ENCODE measurements at regions of chr9 and their contacts with region 1.

Region 1: DNA sequence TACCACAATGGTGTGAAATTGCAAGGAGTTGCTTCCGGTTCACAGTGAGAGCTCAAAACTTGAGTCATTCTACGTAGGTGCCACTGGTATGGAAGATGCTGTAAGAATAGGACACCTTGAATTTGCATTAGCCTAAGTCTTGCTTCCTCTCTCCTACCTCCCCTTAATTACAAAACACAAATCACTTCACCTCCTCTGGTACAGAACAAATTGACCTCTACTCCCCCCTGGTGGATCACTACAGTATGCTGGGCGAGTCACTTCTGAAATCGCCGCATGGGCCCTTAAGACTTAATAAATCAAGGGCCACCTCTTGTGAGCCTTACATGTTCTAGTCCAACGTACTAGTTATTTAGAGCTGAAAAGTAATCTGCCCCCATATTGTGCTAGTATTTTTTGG is 145.3 kb upstream of the SMARCA2 start:
- DNase-seq: peak in 1 of 2 experiments; percentile 53
- H3K4me3 ChIP-seq: no peak overlapping the region
- H3K4me3 Mint-ChIP-seq: no peak overlapping the region
- H3K27ac Mint-ChIP-seq: no peak overlapping the region
- H3K4me1 ChIP-seq: no peaks in the 10 kb centered on the region
- H3K4me1 Mint-ChIP-seq: no peaks in the 10 kb centered on the region
- H3K27me3 ChIP-seq: no peaks in the 10 kb centered on the region
- H3K27me3 Mint-ChIP-seq: peaks cover 5% of the 10 kb centered on the region
- CTCF ChIP-seq: peak; percentile 15 to 57

Region 2: GRCh38 chr9:1726993-1727759 is 142.7 kb before region 1 on chr9:
- CTCF ChIA-PET with region 1: no interaction called
- POLR2A ChIA-PET with region 1: no interaction called
- intact Hi-C with region 1: loop called (anchors 1 kb)
- DNase-seq: peak; percentile 26 to 34
- H3K4me3 ChIP-seq: no peak overlapping the region
- H3K4me3 Mint-ChIP-seq: no peak overlapping the region
- H3K27ac Mint-ChIP-seq: no peak overlapping the region
- H3K4me1 ChIP-seq: no peaks in the 10 kb centered on the region
- H3K4me1 Mint-ChIP-seq: no peaks in the 10 kb centered on the region
- H3K27me3 ChIP-seq: no peaks in the 10 kb centered on the region
- H3K27me3 Mint-ChIP-seq: peaks cover 8% of the 10 kb centered on the region
- CTCF ChIP-seq: peak; percentile 32 to 33

Region 3: DNA sequence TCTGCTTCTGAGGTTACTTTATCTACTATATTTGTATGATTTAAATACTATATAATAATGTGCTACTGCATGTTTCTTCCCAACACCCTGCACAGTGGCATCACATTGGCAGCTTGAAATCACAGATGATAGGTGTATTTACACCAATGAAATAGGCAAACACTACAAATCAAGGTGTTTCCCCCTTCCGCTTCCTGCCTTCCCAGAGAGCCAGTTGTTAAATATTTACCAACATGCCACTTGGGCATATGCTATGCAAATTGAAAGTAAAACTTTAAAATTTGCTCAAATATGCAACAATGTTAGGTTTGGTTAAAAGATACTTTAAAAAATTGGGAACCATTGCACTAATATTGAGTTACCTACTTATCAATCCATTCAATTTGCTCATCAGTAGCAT is 87.1 kb after region 1 on chr9:
- CTCF ChIA-PET with region 1: no interaction called
- POLR2A ChIA-PET with region 1: no interaction called
- intact Hi-C with region 1: no loop called
- DNase-seq: no peak
- H3K4me3 ChIP-seq: no peak overlapping the region
- H3K4me3 Mint-ChIP-seq: no peak overlapping the region
- H3K27ac Mint-ChIP-seq: no peak overlapping the region
- H3K4me1 ChIP-seq: no peaks in the 10 kb centered on the region
- H3K4me1 Mint-ChIP-seq: no peaks in the 10 kb centered on the region
- H3K27me3 ChIP-seq: no peaks in the 10 kb centered on the region
- H3K27me3 Mint-ChIP-seq: peaks cover 2% of the 10 kb centered on the region
- CTCF ChIP-seq: no peak

Measured in Caco-2 (cell line).